K562 (cell line): ENCODE measurements at regions of chr17 and their contacts with region 1.

Region 1: GRCh38 chr17:82098072-82098821 is at the start of gene FASN:
- DNase-seq: peak; percentile 96 to 99 (median 98)
- ATAC-seq: peak; percentile 78
- H3K4me3 ChIP-seq: peak within 1 kb of the TSS; percentile 97
- H3K27ac ChIP-seq: peak within 1 kb of the TSS; percentile 95
- H3K4me1 ChIP-seq: peaks cover 36 to 92% of the 10 kb centered on the region in 2 experiments
- H3K27me3 ChIP-seq: no peaks in the 10 kb centered on the region
- CTCF ChIP-seq: peak; percentile 41 to 77 (median 72); a peak in 5 of 6 replicates
- EP300 ChIP-seq: no peak; the same call in 1 of the 2 replicates
- POLR2A ChIP-seq: peak; percentile 84
- RAD21 ChIP-seq: peak; percentile 22 to 42; a peak in 3 of 4 replicates
- polyA plus RNA-seq, gene FASN: 0.15 to 0.20 TPM

Region 2: GRCh38 chr17:82030470-82031302 is 67.6 kb before region 1 on chr17:
- CTCF ChIA-PET with region 1: interaction called, 3 read pairs
- POLR2A ChIA-PET with region 1: interaction called, 9 read pairs
- in situ Hi-C with region 1: no loop called
- intact Hi-C with region 1: loop called (anchors 5 kb)
- DNase-seq: peak; percentile 70 to 92 (median 76)
- ATAC-seq: peak; percentile 80
- H3K4me3 ChIP-seq: peak overlapping the region; percentile 74
- H3K27ac ChIP-seq: peak overlapping the region; percentile 78; the same call in 2 of the 3 replicates
- H3K4me1 ChIP-seq: peaks cover 17 to 87% of the 10 kb centered on the region in 2 experiments
- H3K27me3 ChIP-seq: no peaks in the 10 kb centered on the region
- CTCF ChIP-seq: peak; percentile 90 to 95 (median 94)
- EP300 ChIP-seq: no peak
- POLR2A ChIP-seq: peak; percentile 55; the same call in 1 of the 2 replicates
- RAD21 ChIP-seq: peak; percentile 96